ENCODE measurements at regions of chr12 and their contacts with region 1.

Region 1: DNA sequence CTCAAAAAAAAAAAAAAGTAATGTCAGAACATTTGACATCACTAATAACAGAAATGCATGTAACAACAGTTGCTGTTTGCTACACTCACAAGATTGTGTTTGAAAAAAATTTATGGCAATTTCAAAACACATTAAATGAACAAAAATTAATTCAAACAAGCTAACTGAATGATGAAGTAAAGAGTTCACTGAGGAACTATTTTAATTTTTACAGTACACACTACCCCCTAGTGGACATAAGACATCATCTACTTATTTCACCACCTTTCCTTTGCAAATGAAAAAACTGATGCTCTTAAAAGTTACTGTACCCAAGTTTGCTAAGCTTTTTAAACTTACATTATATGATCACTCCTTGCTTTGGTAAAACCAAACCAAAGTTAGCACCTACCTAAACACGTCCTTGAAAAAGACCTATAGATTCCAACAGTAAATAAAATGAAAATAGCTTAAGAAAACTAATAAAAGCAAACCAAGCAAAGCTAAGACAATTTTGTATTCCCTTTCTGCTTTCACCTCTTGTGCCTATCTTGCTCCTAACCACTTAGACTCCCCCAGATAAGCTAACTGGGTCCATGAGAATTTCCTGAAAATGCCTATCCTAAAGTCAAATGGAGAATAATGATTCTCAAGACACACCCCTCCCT is 22.2 kb downstream of the UBE2N start:
- DNase-seq: no peak
- H3K4me3 Mint-ChIP-seq: no peak overlapping the region
- H3K27ac Mint-ChIP-seq: no peak overlapping the region
- H3K4me1 Mint-ChIP-seq: peaks cover 88% of the 10 kb centered on the region
- H3K27me3 Mint-ChIP-seq: no peaks in the 10 kb centered on the region

Region 2: GRCh38 chr12:93025145-93025805 is 394.2 kb before region 1 on chr12:
- CTCF ChIA-PET with region 1: interaction called, 3 read pairs
- intact Hi-C with region 1: loop called (anchors 1 kb)
- DNase-seq: no peak
- H3K4me3 Mint-ChIP-seq: no peak overlapping the region
- H3K27ac Mint-ChIP-seq: no peak overlapping the region
- H3K4me1 Mint-ChIP-seq: no peaks in the 10 kb centered on the region
- H3K27me3 Mint-ChIP-seq: peaks cover 3% of the 10 kb centered on the region

Region 3: GRCh38 chr12:93109551-93110203 is 309.8 kb before region 1 on chr12:
- CTCF ChIA-PET with region 1: interaction called, 5 read pairs
- intact Hi-C with region 1: loop called (anchors 1 kb)
- DNase-seq: peak; percentile 83
- H3K4me3 Mint-ChIP-seq: no peak overlapping the region
- H3K27ac Mint-ChIP-seq: peak overlapping the region; percentile 91
- H3K4me1 Mint-ChIP-seq: peaks cover 32% of the 10 kb centered on the region
- H3K27me3 Mint-ChIP-seq: no peaks in the 10 kb centered on the region

Region 4: GRCh38 chr12:93338598-93338997 is 80.9 kb before region 1 on chr12:
- CTCF ChIA-PET with region 1: no interaction called
- intact Hi-C with region 1: no loop called
- DNase-seq: no peak
- H3K4me3 Mint-ChIP-seq: no peak overlapping the region
- H3K27ac Mint-ChIP-seq: no peak overlapping the region
- H3K4me1 Mint-ChIP-seq: no peaks in the 10 kb centered on the region
- H3K27me3 Mint-ChIP-seq: no peaks in the 10 kb centered on the region

Region 5: GRCh38 chr12:93397412-93397811 is 22.1 kb before region 1 on chr12:
- CTCF ChIA-PET with region 1: interaction called, 29 read pairs
- intact Hi-C with region 1: no loop called
- DNase-seq: no peak
- H3K4me3 Mint-ChIP-seq: no peak overlapping the region
- H3K27ac Mint-ChIP-seq: no peak overlapping the region
- H3K4me1 Mint-ChIP-seq: peaks cover 3% of the 10 kb centered on the region
- H3K27me3 Mint-ChIP-seq: no peaks in the 10 kb centered on the region

Region 6: GRCh38 chr12:93434256-93434865 is 14.8 kb after region 1 on chr12:
- CTCF ChIA-PET with region 1: interaction called, 27 read pairs
- intact Hi-C with region 1: loop called (anchors 1 kb)
- DNase-seq: no peak
- H3K4me3 Mint-ChIP-seq: no peak overlapping the region
- H3K27ac Mint-ChIP-seq: no peak overlapping the region
- H3K4me1 Mint-ChIP-seq: peaks cover 78% of the 10 kb centered on the region
- H3K27me3 Mint-ChIP-seq: no peaks in the 10 kb centered on the region

Region 7: GRCh38 chr12:94560431-94561221 is 1141.1 kb after region 1 on chr12:
- CTCF ChIA-PET with region 1: no interaction called
- intact Hi-C with region 1: no loop called
- DNase-seq: peak; percentile 48
- H3K4me3 Mint-ChIP-seq: no peak overlapping the region
- H3K27ac Mint-ChIP-seq: no peak overlapping the region
- H3K4me1 Mint-ChIP-seq: peaks cover 8% of the 10 kb centered on the region
- H3K27me3 Mint-ChIP-seq: peaks cover 16% of the 10 kb centered on the region